HEK293T (cell line): ENCODE measurements at regions of chr22 and their contacts with region 1.

Region 1: GRCh38 chr22:20319745-20320658 is at the start of gene DGCR6L:
- DNase-seq: peak; percentile 95

Region 2: GRCh38 chr22:20298803-20299735 is 20.9 kb before region 1 on chr22:
- CTCF ChIA-PET with region 1: interaction called, 4 read pairs
- POLR2A ChIA-PET with region 1: interaction called, 18 read pairs
- DNase-seq: peak; percentile 93

Region 3: GRCh38 chr22:20354238-20354975 is 34.4 kb after region 1 on chr22:
- CTCF ChIA-PET with region 1: no interaction called
- POLR2A ChIA-PET with region 1: no interaction called
- DNase-seq: no peak